ENCODE measurements at regions of chr14 and their contacts with region 1.

Region 1: GRCh38 chr14:60184146-60184904 is 19.1 kb upstream of the DHRS7 start:
- DNase-seq: peak in 7 of 9 donors; percentile 59 to 80 (median 71)
- ATAC-seq: peak; percentile 85
- H3K4me3 ChIP-seq: peak overlapping the region; percentile 48
- H3K4me3 Mint-ChIP-seq: peak overlapping the region; percentile 73 to 84 (median 80)
- H3K27ac ChIP-seq: peak overlapping the region; percentile 66
- H3K27ac Mint-ChIP-seq: peak overlapping the region; percentile 34 to 94 (median 78)
- H3K4me1 ChIP-seq: peaks cover 0 to 6% of the 10 kb centered on the region in 2 donors
- H3K4me1 Mint-ChIP-seq: peaks cover 4 to 15% (median 9%) of the 10 kb centered on the region in 7 donors
- H3K27me3 ChIP-seq: no peaks in the 10 kb centered on the region
- H3K27me3 Mint-ChIP-seq: peaks cover 0 to 4% (median 0%) of the 10 kb centered on the region in 5 donors

Region 2: DNA sequence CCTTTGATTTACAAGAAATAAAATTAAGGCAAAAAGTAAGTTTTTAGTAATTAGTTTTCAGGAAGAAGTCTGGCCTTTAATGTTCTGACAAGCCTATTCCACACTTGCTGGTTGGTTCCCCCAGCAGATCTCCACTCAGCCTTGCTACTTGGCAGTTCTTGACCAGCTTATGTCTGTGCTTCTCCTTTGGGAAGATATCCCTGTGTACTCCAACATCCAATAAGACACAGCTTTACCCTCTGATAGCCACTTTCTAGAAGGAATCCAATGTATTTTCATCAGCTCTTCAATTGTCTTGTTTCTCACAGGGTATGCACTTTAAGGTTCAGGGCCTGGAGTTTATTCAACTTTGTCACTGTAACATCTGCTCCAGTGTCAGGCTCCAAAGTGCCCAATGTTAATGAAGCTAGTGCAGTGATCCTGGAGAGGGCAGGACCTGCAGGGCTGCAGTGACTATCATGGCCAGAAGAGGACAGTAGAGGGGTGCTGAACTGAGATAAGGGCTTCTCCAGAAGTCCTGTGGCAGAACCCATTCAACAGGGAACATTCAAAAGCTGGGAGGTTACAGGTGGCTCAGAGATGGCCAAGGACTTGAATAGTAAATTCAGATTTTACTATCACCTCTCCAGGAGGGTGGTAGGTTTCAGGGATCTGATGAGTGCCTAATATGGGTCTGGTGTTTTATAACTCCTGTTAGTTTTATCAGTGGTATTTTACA is 677.1 kb before region 1 on chr14:
- CTCF ChIA-PET with region 1: interaction called, 6 read pairs
- POLR2A ChIA-PET with region 1: no interaction called
- intact Hi-C with region 1: loop called (anchors 1 to 5 kb)
- DNase-seq: peak in 8 of 9 donors; percentile 9 to 47 (median 34)
- ATAC-seq: peak; percentile 90
- H3K4me3 ChIP-seq: no peak overlapping the region
- H3K4me3 Mint-ChIP-seq: no peak overlapping the region
- H3K27ac ChIP-seq: no peak overlapping the region
- H3K27ac Mint-ChIP-seq: no peak overlapping the region
- H3K4me1 ChIP-seq: peaks cover 0 to 4% of the 10 kb centered on the region in 2 donors
- H3K4me1 Mint-ChIP-seq: peaks cover 3 to 17% (median 15%) of the 10 kb centered on the region in 7 donors
- H3K27me3 ChIP-seq: no peaks in the 10 kb centered on the region
- H3K27me3 Mint-ChIP-seq: peaks cover 8 to 18% (median 13%) of the 10 kb centered on the region in 5 donors

Region 3: GRCh38 chr14:59632381-59632780 is 551.9 kb before region 1 on chr14:
- CTCF ChIA-PET with region 1: no interaction called
- POLR2A ChIA-PET with region 1: no interaction called
- intact Hi-C with region 1: loop called in 1 of 2 experiments (anchors 5 kb)
- DNase-seq: no peak
- ATAC-seq: no peak
- H3K4me3 ChIP-seq: no peak overlapping the region
- H3K4me3 Mint-ChIP-seq: no peak overlapping the region
- H3K27ac ChIP-seq: no peak overlapping the region
- H3K27ac Mint-ChIP-seq: no peak overlapping the region
- H3K4me1 ChIP-seq: no peaks in the 10 kb centered on the region
- H3K4me1 Mint-ChIP-seq: peaks cover 0 to 7% (median 4%) of the 10 kb centered on the region in 7 donors
- H3K27me3 ChIP-seq: no peaks in the 10 kb centered on the region
- H3K27me3 Mint-ChIP-seq: peaks cover 52 to 69% (median 63%) of the 10 kb centered on the region in 5 donors

Region 4: GRCh38 chr14:60064491-60065072 is 119.7 kb before region 1 on chr14:
- CTCF ChIA-PET with region 1: interaction called, 88 read pairs
- POLR2A ChIA-PET with region 1: interaction called, 4 read pairs
- intact Hi-C with region 1: loop called (anchors 1 kb)
- DNase-seq: peak in 4 of 9 donors; percentile 28 to 39 (median 36)
- ATAC-seq: peak; percentile 70
- H3K4me3 ChIP-seq: no peak overlapping the region
- H3K4me3 Mint-ChIP-seq: no peak overlapping the region
- H3K27ac ChIP-seq: no peak overlapping the region
- H3K27ac Mint-ChIP-seq: no peak overlapping the region
- H3K4me1 ChIP-seq: no peaks in the 10 kb centered on the region
- H3K4me1 Mint-ChIP-seq: no peaks in the 10 kb centered on the region
- H3K27me3 ChIP-seq: no peaks in the 10 kb centered on the region
- H3K27me3 Mint-ChIP-seq: peaks cover 0 to 7% (median 4%) of the 10 kb centered on the region in 5 donors

Region 5: GRCh38 chr14:60133487-60133886 is 50.8 kb before region 1 on chr14:
- CTCF ChIA-PET with region 1: no interaction called
- POLR2A ChIA-PET with region 1: no interaction called
- intact Hi-C with region 1: loop called in 1 of 2 experiments (anchors 5 kb)
- DNase-seq: no peak
- ATAC-seq: no peak
- H3K4me3 ChIP-seq: no peak overlapping the region
- H3K4me3 Mint-ChIP-seq: no peak overlapping the region
- H3K27ac ChIP-seq: no peak overlapping the region
- H3K27ac Mint-ChIP-seq: no peak overlapping the region
- H3K4me1 ChIP-seq: no peaks in the 10 kb centered on the region
- H3K4me1 Mint-ChIP-seq: peaks cover 0 to 13% (median 0%) of the 10 kb centered on the region in 7 donors
- H3K27me3 ChIP-seq: no peaks in the 10 kb centered on the region
- H3K27me3 Mint-ChIP-seq: no peaks in the 10 kb centered on the region

Region 6: GRCh38 chr14:60294411-60295069 is 110.2 kb after region 1 on chr14:
- CTCF ChIA-PET with region 1: no interaction called
- POLR2A ChIA-PET with region 1: no interaction called
- intact Hi-C with region 1: no loop called
- DNase-seq: no peak
- ATAC-seq: no peak
- H3K4me3 ChIP-seq: no peak overlapping the region
- H3K4me3 Mint-ChIP-seq: no peak overlapping the region
- H3K27ac ChIP-seq: no peak overlapping the region
- H3K27ac Mint-ChIP-seq: no peak overlapping the region
- H3K4me1 ChIP-seq: no peaks in the 10 kb centered on the region
- H3K4me1 Mint-ChIP-seq: peaks cover 0 to 6% (median 0%) of the 10 kb centered on the region in 7 donors
- H3K27me3 ChIP-seq: no peaks in the 10 kb centered on the region
- H3K27me3 Mint-ChIP-seq: no peaks in the 10 kb centered on the region

Region 7: GRCh38 chr14:60331201-60332045 is 147.1 kb after region 1 on chr14:
- CTCF ChIA-PET with region 1: interaction called, 3 read pairs
- POLR2A ChIA-PET with region 1: no interaction called
- intact Hi-C with region 1: loop called (anchors 5 kb)
- DNase-seq: peak; percentile 53 to 80 (median 74)
- ATAC-seq: peak; percentile 79
- H3K4me3 ChIP-seq: peak overlapping the region; percentile 55
- H3K4me3 Mint-ChIP-seq: peak overlapping the region; percentile 87 to 98 (median 96)
- H3K27ac ChIP-seq: peak overlapping the region; percentile 55
- H3K27ac Mint-ChIP-seq: peak overlapping the region; percentile 87 to 98 (median 92)
- H3K4me1 ChIP-seq: peaks cover 4 to 13% of the 10 kb centered on the region in 2 donors
- H3K4me1 Mint-ChIP-seq: peaks cover 12 to 46% (median 29%) of the 10 kb centered on the region in 7 donors
- H3K27me3 ChIP-seq: no peaks in the 10 kb centered on the region
- H3K27me3 Mint-ChIP-seq: peaks cover 15 to 44% (median 38%) of the 10 kb centered on the region in 5 donors

Measured in naive thymus-derived CD4-positive, alpha-beta T cell (primary cell).